Activated CD8-positive, alpha-beta T cell treated with anti-CD3 and anti-CD28 coated beads for 36 hours (primary cell): ENCODE measurements at regions of chr3 and their contacts with region 1.

Region 1: DNA sequence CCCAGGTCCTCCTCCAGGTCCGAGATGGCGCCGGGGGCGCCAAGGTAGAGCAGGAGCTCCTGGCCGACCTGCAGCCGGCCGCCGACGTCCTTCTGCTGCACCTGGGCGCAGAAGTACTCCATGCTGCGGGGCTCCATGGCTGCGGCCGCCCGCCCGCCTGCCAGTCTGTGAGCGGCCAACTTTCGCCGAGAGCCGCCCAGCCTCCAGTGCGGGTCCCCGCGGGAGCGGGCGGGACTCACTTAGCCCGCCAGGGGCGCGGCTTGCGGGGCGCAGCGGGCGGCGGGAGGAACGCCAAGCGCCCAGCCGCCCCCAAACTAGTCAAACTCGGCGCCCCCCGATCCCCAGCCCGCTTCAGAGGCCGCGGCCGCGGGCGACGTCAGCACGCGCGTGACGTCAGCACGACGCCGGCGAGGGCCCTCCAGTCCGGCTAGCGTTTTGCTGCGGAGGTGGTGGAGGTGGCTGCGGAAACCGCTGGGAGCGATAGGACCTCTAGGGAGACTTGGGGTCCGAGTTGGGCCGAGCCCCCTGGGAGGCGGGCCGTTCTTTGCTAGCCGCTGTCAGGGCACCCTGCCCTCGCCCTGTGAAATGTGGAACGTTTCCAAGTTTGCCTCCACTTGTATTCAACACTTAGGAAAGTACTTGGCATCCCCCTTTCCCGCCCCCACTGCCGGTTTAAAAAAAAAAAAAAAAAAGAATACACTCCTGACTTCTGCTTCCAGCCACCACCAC is at the start of gene CLASP2:
- DNase-seq: peak; percentile 89
- ATAC-seq: peak; percentile 89
- H3K4me3 Mint-ChIP-seq: peak within 1 kb of the TSS; percentile 90
- H3K27ac Mint-ChIP-seq: peak within 1 kb of the TSS; percentile 95
- H3K4me1 Mint-ChIP-seq: peaks cover 11% of the 10 kb centered on the region
- H3K27me3 Mint-ChIP-seq: no peaks in the 10 kb centered on the region
- CTCF ChIP-seq: no peak
- total RNA-seq, gene CLASP2: 38.4 to 46.4 TPM

Region 2: DNA sequence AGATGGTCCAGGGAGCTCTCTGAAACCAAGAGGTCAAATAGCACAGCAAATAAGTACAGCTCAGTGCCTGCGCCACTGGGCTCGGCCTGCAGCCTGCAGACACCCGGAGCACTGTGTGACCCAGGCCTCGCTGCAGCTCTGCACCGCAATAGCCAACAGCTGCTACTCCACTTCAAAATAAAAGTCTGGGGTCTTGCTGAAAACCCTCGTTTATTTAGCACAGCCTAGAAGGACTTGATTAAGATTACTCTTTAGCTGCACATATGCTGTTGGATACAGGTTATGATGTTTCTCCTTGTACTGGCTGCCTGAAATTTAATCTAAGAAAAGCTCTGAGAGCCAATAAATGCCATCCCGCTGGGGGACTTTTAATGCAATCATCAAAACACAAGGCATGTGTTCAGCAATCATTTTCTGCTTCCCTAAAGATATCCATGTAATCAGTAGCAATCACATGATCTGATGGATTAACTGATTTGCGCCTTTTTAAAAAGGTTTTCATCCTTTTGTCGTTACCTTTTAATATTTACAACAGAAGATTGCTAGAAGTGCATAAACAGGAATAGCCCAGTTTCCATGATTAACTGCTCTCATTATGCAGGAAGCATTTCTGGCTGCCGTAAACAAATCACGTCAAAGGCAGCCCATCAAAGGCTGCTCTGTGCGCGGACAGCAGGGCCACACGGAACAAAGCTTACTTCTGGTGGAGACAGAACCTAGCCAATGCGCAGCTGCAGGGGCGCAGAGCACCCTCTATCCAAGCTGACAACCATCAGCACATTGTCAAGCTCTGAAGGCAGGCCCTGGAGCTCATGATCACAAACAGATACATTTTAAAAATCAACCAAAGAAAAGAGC is 58.8 kb before region 1 on chr3:
- CTCF ChIA-PET with region 1: no interaction called
- POLR2A ChIA-PET with region 1: no interaction called
- intact Hi-C with region 1: loop called (anchors 5 kb)
- DNase-seq: peak; percentile 43
- ATAC-seq: peak; percentile 84
- H3K4me3 Mint-ChIP-seq: peak overlapping the region; percentile 47
- H3K27ac Mint-ChIP-seq: peak overlapping the region; percentile 11
- H3K4me1 Mint-ChIP-seq: peaks cover 28% of the 10 kb centered on the region
- H3K27me3 Mint-ChIP-seq: no peaks in the 10 kb centered on the region
- CTCF ChIP-seq: no peak